Tibial artery (tissue), 4 donors: ENCODE measurements at regions of chr10 and their contacts with region 1.

Region 1: DNA sequence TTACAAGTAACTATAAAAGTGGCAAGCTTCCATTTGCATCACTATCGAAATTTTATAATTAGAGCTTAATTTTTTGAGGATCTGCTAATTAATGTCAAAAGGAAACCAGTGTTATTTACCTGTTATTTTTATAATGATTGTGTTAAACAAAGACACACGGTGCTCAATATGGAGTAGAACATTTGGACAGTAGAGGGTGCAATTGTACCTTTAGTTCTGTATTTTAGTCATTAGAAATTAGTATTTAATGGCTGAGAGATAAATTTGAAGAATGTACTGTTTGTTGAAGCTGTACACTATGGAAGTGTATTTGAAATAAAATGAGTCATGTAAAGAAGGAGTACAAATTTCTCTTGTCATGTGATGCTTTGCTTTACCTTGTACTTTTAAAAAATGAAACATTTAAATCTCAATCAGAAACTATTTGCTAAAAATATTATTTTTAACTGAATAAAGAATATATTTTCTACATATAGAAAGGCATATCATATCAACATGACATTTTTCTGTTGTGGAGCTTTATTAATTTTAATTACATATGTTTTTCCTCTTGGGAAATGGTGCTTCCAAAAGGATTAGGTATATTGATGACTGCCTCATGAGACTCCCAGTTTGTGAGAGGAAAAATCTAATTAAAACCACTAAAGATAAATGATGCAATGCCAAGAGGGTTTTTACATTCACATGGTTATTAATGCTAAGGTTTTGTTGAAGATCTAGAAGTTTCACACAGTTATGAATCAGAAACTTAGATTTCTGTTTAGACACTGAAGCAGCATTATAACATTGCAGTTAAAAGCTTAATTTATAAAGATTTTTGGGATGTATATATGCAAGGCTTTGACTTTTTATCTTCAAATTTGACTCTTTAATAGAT is 10.4 kb upstream of the PRKG1 start:
- DNase-seq: no peak
- H3K4me3 ChIP-seq: no peak overlapping the region
- H3K27ac ChIP-seq: no peak overlapping the region
- H3K4me1 ChIP-seq: peaks cover 0 to 43% (median 4%) of the 10 kb centered on the region in 4 donors
- H3K27me3 ChIP-seq: no peaks in the 10 kb centered on the region
- CTCF ChIP-seq: peak; percentile 50 to 53

Region 2: GRCh38 chr10:50552771-50553535 is 510.9 kb before region 1 on chr10:
- intact Hi-C with region 1: no loop called
- DNase-seq: no peak
- H3K4me3 ChIP-seq: no peak overlapping the region
- H3K27ac ChIP-seq: peak overlapping the region; percentile 25 to 35
- H3K4me1 ChIP-seq: peaks cover 0 to 54% (median 44%) of the 10 kb centered on the region in 4 donors
- H3K27me3 ChIP-seq: no peaks in the 10 kb centered on the region
- CTCF ChIP-seq: peak; percentile 16 to 30

Region 3: GRCh38 chr10:50809596-50809995 is 254.3 kb before region 1 on chr10:
- intact Hi-C with region 1: no loop called
- DNase-seq: no peak
- H3K4me3 ChIP-seq: no peak overlapping the region
- H3K27ac ChIP-seq: no peak overlapping the region
- H3K4me1 ChIP-seq: no peaks in the 10 kb centered on the region
- H3K27me3 ChIP-seq: no peaks in the 10 kb centered on the region
- CTCF ChIP-seq: no peak

Region 4: DNA sequence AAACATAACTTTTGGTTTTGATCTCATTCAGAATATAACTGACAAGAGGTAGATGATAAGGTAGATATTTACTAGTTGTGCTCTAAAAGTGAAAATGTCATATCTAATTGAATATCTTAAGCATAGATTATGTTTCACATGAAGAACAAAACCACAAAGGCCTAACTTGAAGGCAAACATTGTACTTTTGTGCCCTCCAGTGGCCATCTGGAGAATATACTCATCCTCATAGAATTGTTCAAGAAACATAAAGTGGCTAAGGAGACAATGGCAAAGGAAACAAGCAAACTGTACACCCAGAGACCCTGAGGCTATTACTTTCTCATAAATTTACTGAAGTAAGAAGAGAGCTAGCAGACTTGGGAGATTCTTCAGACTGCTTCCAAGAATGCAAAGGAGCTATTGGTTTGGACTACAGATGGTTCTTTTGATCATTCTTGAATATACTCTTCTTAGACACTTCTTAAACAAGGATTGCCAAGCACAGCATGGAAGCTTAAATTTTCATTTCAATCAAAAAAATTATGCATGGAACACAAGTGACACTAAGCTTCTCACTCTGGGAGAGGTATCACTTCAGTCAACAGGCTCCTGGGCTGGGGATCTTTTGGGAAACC is 1152.0 kb after region 1 on chr10:
- intact Hi-C with region 1: loop called (anchors 10 kb)
- DNase-seq: no peak
- H3K4me3 ChIP-seq: no peak overlapping the region
- H3K27ac ChIP-seq: peak overlapping the region in 1 of 2 donors; percentile 11
- H3K4me1 ChIP-seq: peaks cover 0 to 34% (median 4%) of the 10 kb centered on the region in 4 donors
- H3K27me3 ChIP-seq: no peaks in the 10 kb centered on the region
- CTCF ChIP-seq: peak; percentile 74 to 85